Calu3 (cell line): ENCODE measurements at regions of chr11 and their contacts with region 1.

Region 1: DNA sequence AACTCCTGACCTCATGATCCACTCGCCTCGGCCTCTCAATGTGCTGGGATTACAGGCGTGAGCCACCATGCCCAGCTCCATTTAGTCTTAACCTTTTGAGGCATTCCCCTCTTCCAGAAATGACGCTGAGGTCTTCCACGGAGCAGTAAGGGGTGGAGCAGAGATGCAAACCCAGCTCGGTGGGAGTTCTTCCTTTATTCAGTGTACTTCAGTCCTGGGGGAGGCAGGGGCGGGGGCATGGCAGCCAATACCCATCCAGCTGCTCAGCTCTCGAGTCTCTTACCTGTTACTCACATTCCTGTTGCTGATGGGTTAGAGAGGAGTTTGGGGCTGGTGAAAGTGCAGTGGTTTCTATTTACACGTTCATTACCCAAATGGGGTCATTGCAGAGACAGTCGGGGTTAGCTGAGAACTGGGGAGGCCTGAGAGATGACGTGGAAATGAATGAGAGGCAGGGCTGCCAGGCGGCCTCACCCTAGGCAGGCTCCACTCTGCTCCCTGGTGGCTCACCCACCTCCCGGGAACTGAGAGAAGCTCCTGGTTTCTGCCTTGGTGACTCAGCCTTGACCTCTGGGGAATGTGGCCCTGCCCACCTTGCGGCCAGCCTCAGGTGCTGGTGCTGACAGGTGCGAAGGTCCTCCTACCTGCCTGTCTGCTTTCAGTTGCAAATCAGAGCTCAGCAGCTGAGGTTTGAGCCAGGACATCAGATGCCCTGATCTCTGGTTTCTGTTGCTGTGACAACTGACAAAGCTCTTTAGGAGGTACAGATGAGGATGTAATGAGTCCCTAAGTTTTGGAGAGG is 13.4 kb upstream of the ST14 start:
- DNase-seq: peak; percentile 93
- H3K4me3 Mint-ChIP-seq: peak overlapping the region; percentile 60
- H3K27ac Mint-ChIP-seq: peak overlapping the region; percentile 98
- H3K4me1 Mint-ChIP-seq: peaks cover 25% of the 10 kb centered on the region
- H3K27me3 Mint-ChIP-seq: no peaks in the 10 kb centered on the region
- CTCF ChIP-seq: no peak

Region 2: GRCh38 chr11:129922674-129923073 is 223.5 kb before region 1 on chr11:
- CTCF ChIA-PET with region 1: interaction called, 4 read pairs
- intact Hi-C with region 1: loop called (anchors 5 kb)
- DNase-seq: no peak
- H3K4me3 Mint-ChIP-seq: no peak overlapping the region
- H3K27ac Mint-ChIP-seq: no peak overlapping the region
- H3K4me1 Mint-ChIP-seq: peaks cover 8% of the 10 kb centered on the region
- H3K27me3 Mint-ChIP-seq: no peaks in the 10 kb centered on the region
- CTCF ChIP-seq: no peak

Region 3: DNA sequence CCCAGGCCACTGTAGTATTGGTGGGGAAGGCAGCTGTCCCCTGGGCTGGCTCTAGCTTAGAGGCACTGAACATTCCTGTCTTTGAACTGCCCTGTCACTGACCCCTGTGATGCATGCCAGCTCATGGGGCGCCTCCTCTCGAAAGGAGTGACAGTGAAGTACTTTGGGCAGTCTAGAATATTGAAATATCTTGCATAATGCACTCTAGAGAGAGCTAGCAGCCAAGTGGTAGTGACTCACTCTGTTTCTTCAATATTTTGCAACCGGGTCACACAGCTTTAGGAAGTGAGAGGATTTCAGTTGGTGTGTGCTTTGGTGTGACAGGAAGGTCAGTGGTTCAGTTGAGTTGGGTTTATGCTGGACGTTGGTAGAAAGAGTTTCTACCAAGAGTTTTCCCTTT is 22.1 kb before region 1 on chr11:
- CTCF ChIA-PET with region 1: interaction called, 16 read pairs
- intact Hi-C with region 1: no loop called
- DNase-seq: peak; percentile 72
- H3K4me3 Mint-ChIP-seq: peak overlapping the region; percentile 34
- H3K27ac Mint-ChIP-seq: peak overlapping the region; percentile 76
- H3K4me1 Mint-ChIP-seq: peaks cover 43% of the 10 kb centered on the region
- H3K27me3 Mint-ChIP-seq: no peaks in the 10 kb centered on the region
- CTCF ChIP-seq: no peak

Region 4: DNA sequence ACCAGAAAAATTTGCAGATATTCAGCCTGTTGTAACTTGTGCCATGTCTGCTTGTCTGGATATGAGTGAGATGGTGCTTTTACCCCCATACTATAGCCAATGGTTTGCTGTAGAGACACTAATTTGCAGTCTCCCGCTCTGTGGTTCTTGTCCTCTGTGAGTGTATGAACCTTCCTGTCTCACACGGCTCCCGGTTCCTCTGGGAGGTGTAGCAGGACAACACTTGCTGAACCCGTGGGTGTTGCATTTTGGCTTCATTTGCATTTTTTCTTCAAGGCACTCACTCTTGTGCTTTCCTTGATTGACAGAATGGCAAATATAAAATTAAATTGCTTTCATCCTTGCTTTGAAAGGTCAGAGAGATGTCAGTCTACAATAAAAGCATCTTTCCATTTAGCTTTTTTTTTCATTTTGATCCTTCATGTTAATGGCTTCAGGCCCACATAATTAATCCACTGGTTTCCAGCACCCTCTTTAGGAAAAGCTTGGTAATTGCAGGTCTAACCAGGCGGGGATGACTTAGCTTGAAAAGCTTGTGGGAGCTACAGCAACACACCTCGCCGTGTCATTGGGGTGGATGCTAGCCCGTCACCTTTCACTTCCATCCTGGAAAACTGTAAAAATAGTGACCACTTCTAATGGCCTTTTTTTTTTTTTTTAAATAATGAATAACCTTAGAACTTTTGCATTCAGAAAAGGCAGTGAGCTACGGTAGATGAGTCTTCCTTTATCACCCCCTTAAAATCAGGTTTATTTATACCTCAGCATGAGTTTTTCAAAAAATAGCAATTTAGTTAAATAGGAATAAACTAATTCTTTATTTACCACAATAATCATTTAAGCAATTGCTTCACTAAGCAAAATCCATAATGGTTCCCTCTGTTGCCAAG is 14.0 kb before region 1 on chr11:
- CTCF ChIA-PET with region 1: interaction called, 19 read pairs
- intact Hi-C with region 1: no loop called
- DNase-seq: peak; percentile 48
- H3K4me3 Mint-ChIP-seq: no peak overlapping the region
- H3K27ac Mint-ChIP-seq: no peak overlapping the region
- H3K4me1 Mint-ChIP-seq: no peaks in the 10 kb centered on the region
- H3K27me3 Mint-ChIP-seq: no peaks in the 10 kb centered on the region
- CTCF ChIP-seq: peak; percentile 50

Region 5: DNA sequence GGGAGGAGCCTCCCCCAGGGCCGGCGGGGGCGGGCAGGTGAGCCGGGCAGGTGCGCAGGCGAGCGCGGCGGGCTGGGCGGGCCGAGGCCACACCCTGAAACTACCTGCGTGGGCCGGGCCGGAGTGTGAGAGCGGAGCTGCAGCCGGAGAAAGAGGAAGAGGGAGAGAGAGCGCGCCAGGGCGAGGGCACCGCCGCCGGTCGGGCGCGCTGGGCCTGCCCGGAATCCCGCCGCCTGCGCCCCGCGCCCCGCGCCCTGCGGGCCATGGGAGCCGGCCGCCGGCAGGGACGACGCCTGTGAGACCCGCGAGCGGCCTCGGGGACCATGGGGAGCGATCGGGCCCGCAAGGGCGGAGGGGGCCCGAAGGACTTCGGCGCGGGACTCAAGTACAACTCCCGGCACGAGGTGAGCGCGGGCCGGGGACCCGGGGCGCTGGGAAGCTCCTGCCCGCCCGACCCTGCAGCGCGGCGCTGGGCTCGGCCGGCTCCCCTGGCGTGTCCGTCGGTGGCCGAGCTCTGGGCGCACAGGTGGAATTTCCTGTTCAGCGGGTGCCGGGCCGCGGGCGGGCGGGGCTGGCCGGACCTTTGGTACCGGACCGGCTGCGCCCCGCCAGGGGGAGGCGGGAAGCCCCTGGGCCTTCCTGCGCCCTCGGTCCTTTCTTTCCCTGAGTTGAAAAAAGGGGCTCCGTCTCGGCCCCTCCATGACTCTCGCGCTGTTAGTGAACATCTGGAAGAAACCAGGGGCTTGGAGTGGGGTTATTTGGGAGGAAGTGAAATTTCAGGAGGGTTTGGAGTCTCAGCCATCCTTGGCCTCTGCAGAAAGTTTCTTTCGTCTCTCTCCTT is 13.7 kb after region 1 on chr11 and contains the start of gene ST14:
- CTCF ChIA-PET with region 1: interaction called, 14 read pairs
- intact Hi-C with region 1: no loop called
- DNase-seq: peak; percentile 81
- H3K4me3 Mint-ChIP-seq: peak within 1 kb of the TSS; percentile 82
- H3K27ac Mint-ChIP-seq: peak within 1 kb of the TSS; percentile 83
- H3K4me1 Mint-ChIP-seq: peaks cover 54% of the 10 kb centered on the region
- H3K27me3 Mint-ChIP-seq: no peaks in the 10 kb centered on the region
- CTCF ChIP-seq: no peak
- total RNA-seq, gene ST14: 153 and 174 TPM in 2 replicates

Region 6: GRCh38 chr11:130181295-130182272 is 35.4 kb after region 1 on chr11:
- CTCF ChIA-PET with region 1: interaction called, 6 read pairs
- intact Hi-C with region 1: loop called (anchors 2 kb)
- DNase-seq: no peak
- H3K4me3 Mint-ChIP-seq: peak overlapping the region; percentile 26
- H3K27ac Mint-ChIP-seq: peak overlapping the region; percentile 61
- H3K4me1 Mint-ChIP-seq: peaks cover 42% of the 10 kb centered on the region
- H3K27me3 Mint-ChIP-seq: no peaks in the 10 kb centered on the region
- CTCF ChIP-seq: no peak

Region 7: GRCh38 chr11:130202009-130202817 is 56.0 kb after region 1 on chr11:
- CTCF ChIA-PET with region 1: no interaction called
- intact Hi-C with region 1: no loop called
- DNase-seq: no peak
- H3K4me3 Mint-ChIP-seq: no peak overlapping the region
- H3K27ac Mint-ChIP-seq: no peak overlapping the region
- H3K4me1 Mint-ChIP-seq: no peaks in the 10 kb centered on the region
- H3K27me3 Mint-ChIP-seq: no peaks in the 10 kb centered on the region
- CTCF ChIP-seq: no peak